ENCODE measurements at regions of chr14 and their contacts with region 1.

Region 1: GRCh38 chr14:34098045-34098984 is 147.4 kb upstream of the EGLN3 start:
- DNase-seq: peak; percentile 71
- H3K4me3 Mint-ChIP-seq: no peak overlapping the region
- H3K27ac Mint-ChIP-seq: peak overlapping the region; percentile 2
- H3K4me1 Mint-ChIP-seq: peaks cover 20% of the 10 kb centered on the region
- H3K27me3 Mint-ChIP-seq: no peaks in the 10 kb centered on the region
- CTCF ChIP-seq: peak; percentile 51

Region 2: DNA sequence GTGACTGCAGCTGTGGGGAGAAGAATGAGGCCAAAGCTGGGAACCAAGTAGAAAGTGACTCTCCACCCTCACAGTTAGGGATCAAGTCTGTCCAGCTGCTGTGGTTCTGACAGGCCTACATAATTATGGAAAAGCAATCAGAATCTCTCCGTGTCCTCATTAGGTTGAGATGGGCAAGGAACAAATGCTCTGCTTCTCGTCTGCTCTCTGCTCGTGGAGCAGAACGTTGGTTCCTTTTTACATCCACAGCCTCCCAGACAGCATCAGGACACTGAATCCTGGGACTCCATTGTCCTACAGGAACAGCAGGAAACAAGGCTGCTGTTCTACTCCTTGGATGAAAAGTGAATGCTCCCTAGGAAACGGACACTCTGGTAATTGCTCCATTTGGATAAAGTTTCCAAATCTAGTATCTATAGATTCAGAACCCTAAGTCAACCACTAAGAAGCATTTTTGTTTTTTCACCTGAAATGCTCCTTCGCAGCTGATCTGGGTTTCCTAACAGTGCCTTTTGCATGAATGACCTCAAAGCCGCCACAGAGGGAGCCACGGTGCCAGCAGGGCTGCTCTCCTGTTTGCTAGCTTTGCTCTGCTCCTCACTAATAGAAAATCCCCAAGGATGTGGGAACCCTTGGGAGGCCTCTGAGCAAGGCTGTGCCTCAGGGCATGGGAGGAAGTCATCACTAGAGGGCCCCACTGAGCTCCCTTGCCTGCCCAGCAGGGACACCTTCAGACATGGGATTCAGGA is 249.4 kb before region 1 on chr14:
- CTCF ChIA-PET with region 1: interaction called, 75 read pairs
- intact Hi-C with region 1: loop called (anchors 1 kb)
- DNase-seq: peak; percentile 85
- H3K4me3 Mint-ChIP-seq: no peak overlapping the region
- H3K27ac Mint-ChIP-seq: no peak overlapping the region
- H3K4me1 Mint-ChIP-seq: no peaks in the 10 kb centered on the region
- H3K27me3 Mint-ChIP-seq: peaks cover 38% of the 10 kb centered on the region
- CTCF ChIP-seq: peak; percentile 44

Region 3: DNA sequence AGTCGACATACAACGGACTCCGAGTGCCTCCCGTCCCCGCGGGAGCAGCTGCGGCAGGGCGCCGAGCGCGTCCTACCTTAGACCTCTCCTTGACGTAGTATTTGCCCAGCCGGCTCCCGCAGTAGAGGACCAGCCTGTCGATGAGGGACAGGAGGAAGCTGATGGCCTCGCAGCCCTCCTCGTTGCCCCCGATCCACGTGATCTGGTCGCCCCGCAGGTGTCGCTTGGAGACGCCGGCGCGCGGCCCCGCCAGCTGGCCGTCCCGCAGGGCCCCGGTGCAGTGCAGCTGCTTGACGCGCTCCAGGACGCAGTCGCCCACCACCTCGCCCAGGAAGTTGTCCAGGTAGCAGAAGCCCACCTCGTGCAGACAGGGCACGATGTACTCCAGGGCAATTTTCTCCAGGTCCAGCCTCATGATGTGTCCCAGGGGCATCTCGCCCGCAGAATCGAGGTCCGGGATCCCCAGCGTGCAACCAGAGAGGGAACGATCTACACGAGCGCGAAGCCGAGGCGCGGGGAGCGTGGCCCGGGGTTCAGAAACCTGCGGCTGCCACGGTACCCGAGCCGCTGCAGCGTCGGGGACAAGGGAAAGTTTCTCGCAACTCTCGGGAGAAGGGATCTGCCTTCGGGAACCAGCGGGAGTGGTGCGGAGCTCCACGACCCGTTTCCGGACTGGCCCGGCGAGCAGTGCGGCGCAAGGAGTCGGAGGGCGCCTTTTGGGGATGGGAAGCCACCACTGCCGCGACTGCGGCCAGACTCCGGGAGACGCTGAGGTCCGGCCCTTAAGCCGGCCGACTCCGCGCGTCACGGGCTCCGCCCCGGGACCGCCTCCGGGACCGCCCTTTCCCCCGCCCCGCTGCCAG is 147.8 kb before region 1 on chr14 and contains the start of gene EGLN3:
- CTCF ChIA-PET with region 1: interaction called, 4 read pairs
- intact Hi-C with region 1: loop called (anchors 10 kb)
- DNase-seq: peak; percentile 90
- H3K4me3 Mint-ChIP-seq: peak within 1 kb of the TSS; percentile 97
- H3K27ac Mint-ChIP-seq: peak within 1 kb of the TSS; percentile 78
- H3K4me1 Mint-ChIP-seq: peaks cover 8% of the 10 kb centered on the region
- H3K27me3 Mint-ChIP-seq: peaks cover 34% of the 10 kb centered on the region
- CTCF ChIP-seq: no peak
- total RNA-seq, gene EGLN3: 2.7 and 3.1 TPM in 2 replicates

Region 4: GRCh38 chr14:34059855-34060638 is 38.3 kb before region 1 on chr14:
- CTCF ChIA-PET with region 1: interaction called, 23 read pairs
- intact Hi-C with region 1: no loop called
- DNase-seq: peak; percentile 82
- H3K4me3 Mint-ChIP-seq: peak overlapping the region; percentile 75
- H3K27ac Mint-ChIP-seq: peak overlapping the region; percentile 75
- H3K4me1 Mint-ChIP-seq: peaks cover 28% of the 10 kb centered on the region
- H3K27me3 Mint-ChIP-seq: no peaks in the 10 kb centered on the region
- CTCF ChIP-seq: no peak

Region 5: GRCh38 chr14:34113005-34113511 is 14.7 kb after region 1 on chr14:
- CTCF ChIA-PET with region 1: interaction called, 12 read pairs
- intact Hi-C with region 1: no loop called
- DNase-seq: peak; percentile 37
- H3K4me3 Mint-ChIP-seq: no peak overlapping the region
- H3K27ac Mint-ChIP-seq: peak overlapping the region; percentile 79
- H3K4me1 Mint-ChIP-seq: peaks cover 38% of the 10 kb centered on the region
- H3K27me3 Mint-ChIP-seq: no peaks in the 10 kb centered on the region
- CTCF ChIP-seq: no peak

Region 6: GRCh38 chr14:34147461-34147860 is 49.1 kb after region 1 on chr14:
- CTCF ChIA-PET with region 1: no interaction called
- intact Hi-C with region 1: no loop called
- DNase-seq: no peak
- H3K4me3 Mint-ChIP-seq: no peak overlapping the region
- H3K27ac Mint-ChIP-seq: no peak overlapping the region
- H3K4me1 Mint-ChIP-seq: no peaks in the 10 kb centered on the region
- H3K27me3 Mint-ChIP-seq: no peaks in the 10 kb centered on the region
- CTCF ChIP-seq: no peak

Region 7: DNA sequence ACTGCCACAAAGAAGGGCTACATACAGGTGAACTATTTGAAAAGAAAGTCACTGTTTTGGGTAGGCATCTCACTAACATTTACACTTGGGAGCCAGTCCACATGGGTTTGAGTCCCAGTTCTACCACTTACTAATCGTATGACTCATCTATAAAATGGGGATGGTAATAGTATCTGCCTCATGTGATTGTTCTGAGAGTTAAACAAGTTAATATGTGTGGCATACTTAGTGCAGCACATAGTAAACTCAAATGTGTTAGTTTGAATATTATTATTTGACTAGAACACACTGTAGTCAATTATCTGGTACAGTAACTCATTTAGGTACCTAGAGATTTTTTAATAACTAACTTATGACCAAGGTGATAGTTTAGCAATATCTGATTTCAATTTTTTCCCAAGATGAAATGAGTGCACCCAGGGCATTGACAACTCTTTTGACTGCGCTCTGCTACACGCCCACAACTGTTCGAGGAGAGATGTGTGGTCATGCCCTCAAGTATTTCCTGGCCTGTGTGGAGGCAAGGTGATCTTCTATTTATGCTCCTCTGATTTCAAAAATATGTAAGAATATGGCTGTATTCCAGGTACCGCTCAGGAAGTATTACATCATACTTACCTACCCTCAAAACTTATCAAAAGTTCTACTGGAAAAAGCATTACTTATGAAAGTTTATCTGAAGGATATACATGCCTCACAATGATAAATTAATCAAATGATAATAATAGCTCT is 63.2 kb after region 1 on chr14:
- CTCF ChIA-PET with region 1: no interaction called
- intact Hi-C with region 1: no loop called
- DNase-seq: peak; percentile 37
- H3K4me3 Mint-ChIP-seq: no peak overlapping the region
- H3K27ac Mint-ChIP-seq: no peak overlapping the region
- H3K4me1 Mint-ChIP-seq: no peaks in the 10 kb centered on the region
- H3K27me3 Mint-ChIP-seq: no peaks in the 10 kb centered on the region
- CTCF ChIP-seq: no peak

Region 8: DNA sequence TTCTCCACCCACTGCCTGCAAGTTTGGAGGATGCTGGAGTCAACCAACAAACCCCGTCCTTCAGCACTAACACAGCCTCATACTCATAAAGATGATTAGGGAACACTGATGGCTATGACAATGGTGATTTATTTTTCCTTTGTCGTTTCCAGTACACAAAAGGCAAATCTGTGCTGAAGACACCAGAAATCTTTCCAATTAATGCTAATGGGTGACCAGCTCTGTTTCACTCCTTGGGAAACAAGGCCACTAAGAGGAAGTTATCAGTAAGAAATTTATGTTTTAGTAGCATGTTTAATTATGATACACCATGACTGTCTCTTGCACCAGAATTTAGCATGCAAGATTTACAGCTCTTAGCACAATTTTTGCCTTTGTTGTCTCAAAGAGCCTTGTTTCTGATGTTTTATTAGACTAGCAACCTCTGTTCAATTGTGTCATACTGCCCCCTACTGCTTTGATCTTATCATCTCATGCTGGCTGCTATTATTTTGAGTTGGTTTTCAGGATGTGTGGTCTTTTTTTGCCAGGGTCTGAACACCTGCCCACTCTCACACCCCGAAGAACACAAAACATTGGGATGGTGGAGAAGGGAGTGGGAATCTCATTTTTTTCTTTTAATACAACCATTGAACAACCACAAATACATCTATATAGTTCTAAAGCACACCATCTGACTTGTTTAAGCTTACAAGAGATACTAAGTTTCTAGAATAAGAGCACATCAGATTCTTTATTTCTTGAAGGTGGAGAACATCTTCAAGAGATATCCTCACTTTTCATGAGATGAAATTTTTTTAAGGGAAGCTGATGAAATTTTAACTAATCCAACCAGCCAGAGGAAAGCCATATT is 202.8 kb after region 1 on chr14:
- CTCF ChIA-PET with region 1: interaction called, 15 read pairs
- intact Hi-C with region 1: loop called (anchors 1 kb)
- DNase-seq: peak; percentile 54
- H3K4me3 Mint-ChIP-seq: no peak overlapping the region
- H3K27ac Mint-ChIP-seq: no peak overlapping the region
- H3K4me1 Mint-ChIP-seq: peaks cover 10% of the 10 kb centered on the region
- H3K27me3 Mint-ChIP-seq: peaks cover 17% of the 10 kb centered on the region
- CTCF ChIP-seq: peak; percentile 37